ENCODE measurements at regions of chr2 and their contacts with region 1.

Region 1: DNA sequence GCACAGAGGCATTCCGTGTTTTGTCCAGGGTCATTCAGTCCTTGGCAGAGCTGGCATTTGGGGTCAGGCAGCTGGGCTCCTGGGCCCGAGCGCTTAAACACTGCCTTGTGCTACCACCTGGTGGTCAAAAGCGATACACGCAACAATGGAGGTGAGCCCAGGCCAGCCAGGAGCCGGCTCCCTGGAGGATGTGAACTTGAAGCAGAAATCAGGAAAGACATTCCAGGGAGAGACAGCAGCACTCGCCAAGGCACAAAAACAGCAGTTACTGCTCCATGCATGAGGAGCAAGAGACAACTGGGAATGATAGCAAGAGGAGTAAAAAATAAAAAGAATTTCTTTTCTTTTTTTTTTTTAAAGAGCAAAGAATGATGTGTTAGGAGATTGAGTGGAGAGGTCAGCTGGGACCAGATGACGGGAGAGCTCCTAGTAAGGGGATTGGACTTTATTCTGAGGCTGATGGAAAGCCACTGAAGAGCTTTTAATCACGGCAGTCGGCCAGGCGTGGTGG is 20.7 kb downstream of the SCYGR8 start:
- DNase-seq: peak; percentile 72
- ATAC-seq: peak; percentile 94
- H3K4me3 Mint-ChIP-seq: no peak overlapping the region
- H3K27ac Mint-ChIP-seq: no peak overlapping the region
- H3K4me1 Mint-ChIP-seq: no peaks in the 10 kb centered on the region
- H3K27me3 Mint-ChIP-seq: no peaks in the 10 kb centered on the region
- CTCF ChIP-seq: peak; percentile 86

Region 2: GRCh38 chr2:227125506-227125905 is 640.9 kb before region 1 on chr2:
- CTCF ChIA-PET with region 1: interaction called, 12 read pairs
- POLR2A ChIA-PET with region 1: no interaction called
- intact Hi-C with region 1: loop called (anchors 10 kb)
- DNase-seq: peak; percentile 5
- ATAC-seq: no peak
- H3K4me3 Mint-ChIP-seq: no peak overlapping the region
- H3K27ac Mint-ChIP-seq: no peak overlapping the region
- H3K4me1 Mint-ChIP-seq: no peaks in the 10 kb centered on the region
- H3K27me3 Mint-ChIP-seq: peaks cover 10% of the 10 kb centered on the region
- CTCF ChIP-seq: no peak

Region 3: GRCh38 chr2:227238238-227239237 is 527.9 kb before region 1 on chr2:
- CTCF ChIA-PET with region 1: interaction called, 22 read pairs
- POLR2A ChIA-PET with region 1: no interaction called
- intact Hi-C with region 1: no loop called
- DNase-seq: peak; percentile 79
- ATAC-seq: no peak
- H3K4me3 Mint-ChIP-seq: no peak overlapping the region
- H3K27ac Mint-ChIP-seq: no peak overlapping the region
- H3K4me1 Mint-ChIP-seq: no peaks in the 10 kb centered on the region
- H3K27me3 Mint-ChIP-seq: peaks cover 8% of the 10 kb centered on the region
- CTCF ChIP-seq: peak; percentile 87

Region 4: GRCh38 chr2:227479865-227480475 is 286.5 kb before region 1 on chr2:
- CTCF ChIA-PET with region 1: interaction called, 9 read pairs
- POLR2A ChIA-PET with region 1: no interaction called
- intact Hi-C with region 1: loop called (anchors 10 kb)
- DNase-seq: no peak
- ATAC-seq: peak; percentile 43
- H3K4me3 Mint-ChIP-seq: peak overlapping the region; percentile 28
- H3K27ac Mint-ChIP-seq: peak overlapping the region; percentile 78
- H3K4me1 Mint-ChIP-seq: peaks cover 75% of the 10 kb centered on the region
- H3K27me3 Mint-ChIP-seq: no peaks in the 10 kb centered on the region
- CTCF ChIP-seq: peak; percentile 65

Region 5: GRCh38 chr2:227862227-227862740 is 95.9 kb after region 1 on chr2:
- CTCF ChIA-PET with region 1: interaction called, 17 read pairs
- POLR2A ChIA-PET with region 1: no interaction called
- intact Hi-C with region 1: no loop called
- DNase-seq: peak; percentile 62
- ATAC-seq: peak; percentile 51
- H3K4me3 Mint-ChIP-seq: no peak overlapping the region
- H3K27ac Mint-ChIP-seq: no peak overlapping the region
- H3K4me1 Mint-ChIP-seq: no peaks in the 10 kb centered on the region
- H3K27me3 Mint-ChIP-seq: peaks cover 5% of the 10 kb centered on the region
- CTCF ChIP-seq: peak; percentile 78

Measured in activated CD8-positive, alpha-beta T cell treated with anti-CD3 and anti-CD28 coated beads for 36 hours (primary cell).